Heart left ventricle (tissue), 16 donors: ENCODE measurements at regions of chr1 and their contacts with region 1.

Region 1: DNA sequence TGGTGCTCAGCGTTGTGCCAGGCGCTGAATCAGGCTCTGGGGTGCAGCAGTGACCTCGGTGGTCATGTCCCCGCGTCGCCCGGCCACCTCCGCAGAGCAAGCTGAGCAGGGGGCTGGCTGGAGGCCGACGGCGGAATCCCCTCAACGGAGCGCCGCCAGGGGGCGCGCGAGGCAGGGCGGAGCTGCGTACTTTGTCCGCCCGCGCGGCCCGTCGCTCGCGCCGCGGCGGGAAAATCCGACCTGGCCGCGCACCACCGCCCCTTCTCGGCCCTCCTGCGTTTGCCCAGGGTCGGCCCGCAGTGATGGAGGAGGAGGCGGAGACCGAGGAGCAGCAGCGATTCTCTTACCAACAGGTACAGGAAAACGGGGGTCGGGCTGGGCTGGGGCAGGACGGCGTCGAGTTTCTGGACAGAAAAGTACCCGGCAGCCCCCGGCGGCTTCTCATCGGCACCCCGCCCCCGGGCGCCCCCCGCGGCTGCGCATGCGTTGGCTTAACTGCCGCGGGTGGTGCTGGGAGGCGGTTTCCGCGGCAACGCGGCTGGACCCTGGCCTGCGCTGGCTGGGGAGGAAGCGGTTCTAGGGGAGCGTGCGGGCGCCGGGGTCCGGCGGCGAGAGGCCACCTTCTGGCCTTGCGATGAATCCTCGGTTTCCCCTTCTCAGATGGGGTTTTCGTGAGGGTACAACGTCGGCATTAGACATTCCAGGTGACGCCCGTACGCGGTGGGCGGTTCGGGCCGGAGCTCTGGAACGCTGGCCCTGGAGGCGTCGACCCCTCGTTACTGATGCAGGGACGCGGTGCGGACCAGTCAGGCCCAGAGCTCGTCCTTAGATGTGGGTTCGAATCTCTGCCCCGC is at the start of gene CENPS:
- DNase-seq: peak; percentile 91 to 96 (median 95)
- ATAC-seq: peak; percentile 87 to 98 (median 97)
- H3K4me3 ChIP-seq: peak within 1 kb of the TSS; percentile 61 to 93 (median 82)
- H3K27ac ChIP-seq: peak within 1 kb of the TSS in 11 of 12 donors; percentile 8 to 82 (median 69)
- H3K4me1 ChIP-seq: peaks cover 0 to 26% (median 12%) of the 10 kb centered on the region in 12 donors
- H3K27me3 ChIP-seq: no peaks in the 10 kb centered on the region
- CTCF ChIP-seq: peak; percentile 94 to 99 (median 97)
- POLR2A ChIP-seq: peak in 1 of 2 donors; percentile 31
- total RNA-seq, gene CENPS: 2.4 to 11.6 (median 8.5) TPM

Region 2: DNA sequence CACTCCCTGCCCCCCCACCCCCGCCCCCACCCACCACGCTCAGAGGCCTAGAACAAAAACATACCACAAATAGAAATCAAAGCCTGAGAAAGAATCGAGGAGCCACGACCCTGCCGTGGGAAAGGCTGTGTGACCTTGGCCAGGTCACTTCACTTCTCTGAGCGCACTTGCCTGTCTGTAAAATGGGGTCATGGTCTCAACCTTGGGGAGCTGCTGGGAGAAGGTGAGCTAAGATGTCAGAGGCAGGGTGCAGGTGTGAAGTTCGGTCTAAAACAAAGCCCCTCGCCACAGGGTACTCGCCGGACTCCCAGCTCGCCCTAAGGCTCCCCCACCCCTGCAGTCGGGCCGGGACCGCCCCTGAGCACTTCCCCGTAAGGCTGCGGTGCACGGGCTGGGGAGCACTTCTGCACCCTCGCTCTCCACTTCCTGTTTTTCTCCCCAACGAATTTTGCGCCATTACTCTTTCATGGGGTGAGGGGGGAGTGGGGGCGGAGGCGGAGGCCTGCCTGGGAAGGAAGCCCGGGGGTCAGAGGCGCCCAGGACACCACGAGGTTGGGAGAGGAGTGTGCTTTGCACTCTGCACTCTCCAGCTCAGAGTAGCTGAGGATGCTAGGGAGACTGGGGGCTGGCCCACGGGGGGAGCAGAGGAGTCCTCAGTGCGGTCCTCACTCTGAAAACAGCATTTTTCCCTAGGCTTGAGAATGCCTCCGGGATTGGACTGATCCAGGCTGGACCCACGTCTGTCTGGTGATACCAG is 800.8 kb before region 1 on chr1:
- intact Hi-C with region 1: loop called in 3 of 10 experiments (anchors 2 to 10 kb)
- DNase-seq: peak; percentile 58 to 87 (median 69)
- ATAC-seq: peak; percentile 42 to 71 (median 54)
- H3K4me3 ChIP-seq: peak overlapping the region in 2 of 12 donors; percentile 26 to 54
- H3K27ac ChIP-seq: peak overlapping the region in 2 of 12 donors; percentile 13 to 85
- H3K4me1 ChIP-seq: peaks cover 0 to 62% (median 0%) of the 10 kb centered on the region in 12 donors
- H3K27me3 ChIP-seq: peaks cover 0 to 17% (median 0%) of the 10 kb centered on the region in 9 donors
- CTCF ChIP-seq: no peak
- POLR2A ChIP-seq: no peak

Region 3: DNA sequence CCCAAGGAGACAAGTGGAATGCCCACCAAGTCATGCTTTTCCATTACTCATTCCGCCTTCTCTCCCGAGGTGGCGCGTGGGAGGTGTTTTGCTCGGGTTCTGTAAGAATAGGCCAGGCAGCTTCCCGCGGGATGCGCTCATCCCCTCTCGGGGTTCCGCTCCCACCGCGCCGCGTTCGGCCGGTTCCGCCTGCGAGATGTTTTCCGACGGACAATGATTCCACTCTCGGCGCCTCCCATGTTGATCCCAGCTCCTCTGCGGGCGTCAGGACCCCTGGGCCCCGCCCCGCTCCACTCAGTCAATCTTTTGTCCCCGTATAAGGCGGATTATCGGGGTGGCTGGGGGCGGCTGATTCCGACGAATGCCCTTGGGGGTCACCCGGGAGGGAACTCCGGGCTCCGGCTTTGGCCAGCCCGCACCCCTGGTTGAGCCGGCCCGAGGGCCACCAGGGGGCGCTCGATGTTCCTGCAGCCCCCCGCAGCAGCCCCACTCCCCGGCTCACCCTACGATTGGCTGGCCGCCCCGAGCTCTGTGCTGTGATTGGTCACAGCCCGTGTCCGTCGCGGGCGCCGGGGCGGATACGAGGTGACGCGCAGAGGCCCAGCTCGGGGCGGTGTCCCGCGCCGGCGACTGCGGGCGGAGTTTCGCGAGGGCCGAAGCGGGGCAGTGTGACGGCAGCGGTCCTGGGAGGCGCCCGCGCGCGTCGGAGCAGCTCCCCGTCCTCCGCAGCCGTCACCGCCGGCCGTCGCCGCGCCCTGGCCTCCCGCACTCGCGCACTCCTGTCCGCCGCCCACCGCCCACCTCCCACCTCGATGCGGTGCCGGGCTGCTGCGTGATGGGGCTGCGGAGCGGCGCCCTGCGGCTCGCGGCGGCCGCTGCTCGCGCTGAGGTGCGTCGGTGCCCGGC is 220.3 kb before region 1 on chr1 and contains the start of gene KIF1B:
- intact Hi-C with region 1: loop called in 1 of 10 experiments (anchors 5 kb)
- DNase-seq: peak; percentile 99 to 100 (median 99)
- ATAC-seq: peak; percentile 96 to 99 (median 98)
- H3K4me3 ChIP-seq: peak within 1 kb of the TSS; percentile 80 to 97 (median 94)
- H3K27ac ChIP-seq: peak within 1 kb of the TSS; percentile 97 to 100 (median 99)
- H3K4me1 ChIP-seq: peaks cover 0 to 44% (median 31%) of the 10 kb centered on the region in 12 donors
- H3K27me3 ChIP-seq: no peaks in the 10 kb centered on the region
- CTCF ChIP-seq: peak; percentile 98 to 100 (median 98)
- POLR2A ChIP-seq: peak; percentile 97 to 99
- total RNA-seq, gene KIF1B: 65.5 to 137 (median 82.0) TPM

Region 4: DNA sequence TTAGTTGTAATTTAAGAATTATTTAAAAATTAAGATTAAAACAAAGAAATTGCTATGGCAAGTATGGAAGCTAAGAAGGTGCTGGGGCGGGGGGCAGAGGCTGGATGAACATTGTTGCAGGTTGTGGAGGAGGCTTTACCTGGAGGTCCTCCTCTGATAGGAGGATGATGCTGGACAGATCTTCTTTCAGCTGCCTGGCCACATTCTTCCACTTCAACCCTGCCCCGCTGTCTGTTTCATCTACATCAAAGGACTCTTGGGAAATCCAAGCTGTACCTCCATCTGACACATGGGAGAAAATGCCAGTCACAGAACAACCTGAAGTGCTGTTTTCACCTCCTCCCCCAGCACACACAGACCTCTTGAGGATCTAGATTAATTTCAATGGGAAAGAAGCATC is 36.6 kb after region 1 on chr1:
- intact Hi-C with region 1: loop called in 5 of 10 experiments (anchors 2 to 5 kb)
- DNase-seq: peak in 1 of 5 donors; percentile 0
- ATAC-seq: no peak
- H3K4me3 ChIP-seq: no peak overlapping the region
- H3K27ac ChIP-seq: no peak overlapping the region
- H3K4me1 ChIP-seq: peaks cover 0 to 13% (median 7%) of the 10 kb centered on the region in 12 donors
- H3K27me3 ChIP-seq: no peaks in the 10 kb centered on the region
- CTCF ChIP-seq: no peak
- POLR2A ChIP-seq: no peak

Region 5: DNA sequence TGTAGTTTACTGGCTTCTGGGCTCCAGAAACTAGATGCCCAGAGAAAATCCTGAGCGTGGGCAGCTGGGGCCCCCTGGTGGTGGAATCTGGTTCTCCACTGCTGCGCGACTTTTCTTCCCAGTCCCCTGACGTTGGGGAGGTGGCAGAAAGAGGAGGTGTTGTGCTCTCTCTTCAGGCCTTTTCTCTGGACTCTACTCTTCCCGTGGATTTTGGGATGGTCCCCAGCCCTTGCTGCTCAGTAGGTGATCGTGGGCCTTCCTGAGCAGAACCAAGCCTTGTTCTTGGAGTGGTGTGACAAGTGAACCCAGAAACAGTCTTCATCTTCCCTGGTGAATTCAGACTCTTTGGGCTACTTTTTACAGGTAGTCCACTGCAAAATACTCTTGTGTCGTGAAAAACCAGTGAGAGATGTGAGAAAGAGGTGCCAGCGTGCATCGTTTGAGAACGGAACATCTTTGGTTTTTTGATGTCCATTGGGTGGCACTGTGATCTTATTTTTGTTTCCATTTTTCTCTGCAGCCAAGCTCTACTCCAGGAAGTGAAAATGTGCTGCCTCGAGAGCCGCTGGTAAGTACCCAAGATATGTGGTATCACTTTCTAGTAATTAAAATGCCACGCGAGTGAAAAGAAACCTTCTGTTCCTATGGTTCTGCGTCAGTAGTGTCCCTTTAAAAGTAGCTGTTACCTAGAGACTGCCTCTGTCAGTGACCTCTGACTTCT is 64.5 kb after region 1 on chr1:
- intact Hi-C with region 1: loop called in 9 of 10 experiments (anchors 1 to 10 kb)
- DNase-seq: peak; percentile 46 to 82 (median 63)
- ATAC-seq: peak; percentile 87 to 89 (median 88)
- H3K4me3 ChIP-seq: peak overlapping the region in 9 of 12 donors; percentile 11 to 50 (median 30)
- H3K27ac ChIP-seq: peak overlapping the region in 10 of 12 donors; percentile 33 to 81 (median 58)
- H3K4me1 ChIP-seq: peaks cover 0 to 28% (median 18%) of the 10 kb centered on the region in 12 donors
- H3K27me3 ChIP-seq: no peaks in the 10 kb centered on the region
- CTCF ChIP-seq: peak; percentile 76 to 91 (median 87)
- POLR2A ChIP-seq: no peak